ENCODE measurements at regions of chr9 and their contacts with region 1.

Region 1: GRCh38 chr9:95510709-95511615 is 5.8 kb downstream of the PTCH1 start:
- DNase-seq: peak; percentile 69 to 93
- ATAC-seq: peak; percentile 58 to 81
- H3K4me3 ChIP-seq: peak overlapping the region; percentile 84
- H3K27ac ChIP-seq: peak overlapping the region; percentile 85 to 97
- H3K4me1 ChIP-seq: 0 out of 3 replicates have a peak, but pooled peaks cover 5% of the 10 kb centered on the region
- CTCF ChIP-seq: no peak
- EP300 ChIP-seq: no peak
- POLR2A ChIP-seq: no peak; the same call in 1 of the 2 replicates
- RAD21 ChIP-seq: no peak

Region 2: GRCh38 chr9:95383185-95383673 is 127.7 kb before region 1 on chr9:
- CTCF ChIA-PET with region 1: no interaction called
- POLR2A ChIA-PET with region 1: interaction called, 12 read pairs
- DNase-seq: peak; percentile 73 to 80
- ATAC-seq: peak; percentile 73 to 80; a peak in 5 of 6 replicates
- H3K4me3 ChIP-seq: no peak overlapping the region
- H3K27ac ChIP-seq: peak overlapping the region; percentile 59 to 78
- H3K4me1 ChIP-seq: peaks cover 49% of the 10 kb centered on the region
- CTCF ChIP-seq: no peak
- EP300 ChIP-seq: peak; percentile 30 to 34; a peak in 1 of 5 replicates
- POLR2A ChIP-seq: no peak
- RAD21 ChIP-seq: no peak

Region 3: GRCh38 chr9:95409650-95410426 is 101.1 kb before region 1 on chr9:
- CTCF ChIA-PET with region 1: no interaction called
- POLR2A ChIA-PET with region 1: no interaction called
- DNase-seq: peak in 1 of 2 experiments; percentile 21
- ATAC-seq: no peak
- H3K4me3 ChIP-seq: no peak overlapping the region
- H3K27ac ChIP-seq: peak overlapping the region; percentile 40 to 68; a peak in 5 of 6 replicates
- H3K4me1 ChIP-seq: peaks cover 39% of the 10 kb centered on the region
- CTCF ChIP-seq: no peak
- EP300 ChIP-seq: no peak
- POLR2A ChIP-seq: no peak
- RAD21 ChIP-seq: no peak

Region 4: GRCh38 chr9:95666096-95666784 is 155.3 kb after region 1 on chr9:
- CTCF ChIA-PET with region 1: no interaction called
- POLR2A ChIA-PET with region 1: no interaction called
- DNase-seq: no peak
- ATAC-seq: no peak; a peak in 1 of 6 replicates
- H3K4me3 ChIP-seq: no peak overlapping the region
- H3K27ac ChIP-seq: no peak overlapping the region
- H3K4me1 ChIP-seq: no peaks in the 10 kb centered on the region
- CTCF ChIP-seq: no peak
- EP300 ChIP-seq: no peak
- POLR2A ChIP-seq: no peak
- RAD21 ChIP-seq: no peak

Region 5: GRCh38 chr9:95756986-95757385 is 246.0 kb after region 1 on chr9:
- CTCF ChIA-PET with region 1: no interaction called
- POLR2A ChIA-PET with region 1: no interaction called
- DNase-seq: no peak
- ATAC-seq: no peak
- H3K4me3 ChIP-seq: no peak overlapping the region
- H3K27ac ChIP-seq: no peak overlapping the region
- H3K4me1 ChIP-seq: no peaks in the 10 kb centered on the region
- CTCF ChIP-seq: no peak
- EP300 ChIP-seq: no peak
- POLR2A ChIP-seq: no peak
- RAD21 ChIP-seq: no peak

Region 6: GRCh38 chr9:95875305-95876137 is 364.6 kb after region 1 on chr9 and contains the start of gene ERCC6L2:
- CTCF ChIA-PET with region 1: no interaction called
- POLR2A ChIA-PET with region 1: interaction called, 15 read pairs
- DNase-seq: peak; percentile 88 to 99
- ATAC-seq: peak; percentile 95
- H3K4me3 ChIP-seq: no peak within 1 kb of the TSS
- H3K27ac ChIP-seq: no peak within 1 kb of the TSS
- H3K4me1 ChIP-seq: peaks cover 20% of the 10 kb centered on the region; the same call in 1 of the 3 replicates
- CTCF ChIP-seq: no peak
- EP300 ChIP-seq: no peak
- POLR2A ChIP-seq: peak; percentile 62
- RAD21 ChIP-seq: peak; percentile 11 to 37; a peak in 2 of 5 replicates
- polyA plus RNA-seq, gene ERCC6L2: 34.5 and 36.7 TPM in 2 replicates

Region 7: DNA sequence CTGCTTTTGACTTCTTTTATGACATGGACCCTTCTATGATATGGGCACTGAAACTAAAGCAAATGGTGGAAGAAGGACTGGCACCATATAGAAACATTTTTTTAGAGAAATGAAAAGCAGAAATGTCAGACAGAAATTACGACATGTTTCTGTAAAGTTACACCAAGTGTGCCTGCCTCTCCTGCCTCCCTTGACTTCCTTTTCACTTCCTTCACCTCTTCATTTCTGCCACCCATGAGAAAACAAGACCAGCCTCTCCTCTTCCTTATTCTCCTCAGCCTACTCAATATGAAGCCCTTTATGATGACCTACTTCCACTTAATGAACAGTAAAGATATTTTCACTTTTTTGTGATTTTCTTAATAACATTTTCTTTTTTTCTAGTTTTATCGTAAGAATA is 409.1 kb after region 1 on chr9:
- CTCF ChIA-PET with region 1: no interaction called
- POLR2A ChIA-PET with region 1: no interaction called
- DNase-seq: no peak
- ATAC-seq: no peak
- H3K4me3 ChIP-seq: no peak overlapping the region
- H3K27ac ChIP-seq: no peak overlapping the region
- H3K4me1 ChIP-seq: no peaks in the 10 kb centered on the region
- CTCF ChIP-seq: no peak
- EP300 ChIP-seq: no peak
- POLR2A ChIP-seq: no peak
- RAD21 ChIP-seq: no peak